ENCODE measurements at regions of chr12 and their contacts with region 1.

Region 1: DNA sequence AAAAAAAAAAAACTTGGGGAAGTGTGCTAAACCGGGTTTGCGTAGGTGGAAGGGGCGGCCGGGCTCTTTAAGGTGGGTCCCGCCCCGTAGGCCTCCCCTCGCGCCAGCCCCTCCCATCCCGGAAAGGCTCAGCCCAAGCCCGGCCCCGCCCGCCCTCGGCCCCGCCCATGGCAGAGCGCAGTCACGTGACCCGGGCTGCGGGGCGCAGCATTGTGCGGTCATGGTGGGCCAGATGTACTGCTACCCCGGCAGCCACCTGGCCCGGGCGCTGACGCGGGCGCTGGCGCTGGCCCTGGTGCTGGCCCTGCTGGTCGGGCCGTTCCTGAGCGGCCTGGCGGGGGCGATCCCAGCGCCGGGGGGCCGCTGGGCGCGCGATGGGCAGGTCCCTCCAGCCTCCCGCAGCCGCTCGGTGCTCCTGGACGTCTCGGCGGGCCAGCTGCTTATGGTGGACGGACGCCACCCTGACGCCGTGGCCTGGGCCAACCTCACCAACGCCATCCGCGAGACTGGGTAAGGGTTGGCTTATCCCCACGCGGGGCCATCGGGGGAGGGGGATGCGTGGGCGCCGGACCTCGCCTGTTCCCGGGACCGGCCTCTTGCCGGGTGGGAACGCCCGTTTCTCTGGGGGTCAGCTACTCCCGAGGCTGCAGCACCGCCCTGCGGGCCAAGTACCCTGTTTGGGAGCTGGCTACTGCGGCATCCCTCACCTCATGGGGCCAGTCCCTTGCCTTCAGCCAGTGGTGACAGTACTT is at the start of gene PLBD2:
- DNase-seq: peak; percentile 97
- ATAC-seq: peak; percentile 99
- H3K4me3 ChIP-seq: peak within 1 kb of the TSS; percentile 95
- H3K27ac ChIP-seq: peak within 1 kb of the TSS; percentile 90
- H3K4me1 ChIP-seq: peaks cover 19% of the 10 kb centered on the region
- H3K27me3 ChIP-seq: no peaks in the 10 kb centered on the region
- CTCF ChIP-seq: no peak
- total RNA-seq, gene PLBD2: 44.8 TPM

Region 2: GRCh38 chr12:113208041-113208934 is 150.3 kb before region 1 on chr12:
- intact Hi-C with region 1: loop called (anchors 10 kb)
- DNase-seq: no peak
- ATAC-seq: peak; percentile 85 to 91
- H3K4me3 ChIP-seq: no peak overlapping the region
- H3K27ac ChIP-seq: peak overlapping the region; percentile 57
- H3K4me1 ChIP-seq: peaks cover 37% of the 10 kb centered on the region
- H3K27me3 ChIP-seq: no peaks in the 10 kb centered on the region
- CTCF ChIP-seq: no peak

Measured in lower lobe of right lung (tissue), 2 donors.